PC-9 (cell line): ENCODE measurements at regions of chr5 and their contacts with region 1.

Region 1: GRCh38 chr5:154493274-154493673 is 15.2 kb upstream of the HAND1 start:
- DNase-seq: no peak
- H3K4me3 ChIP-seq: no peak overlapping the region
- H3K27ac ChIP-seq: no peak overlapping the region
- H3K4me1 ChIP-seq: no peaks in the 10 kb centered on the region
- H3K27me3 ChIP-seq: peaks cover 6% of the 10 kb centered on the region; the same call in 1 of the 2 replicates
- CTCF ChIP-seq: no peak

Region 2: GRCh38 chr5:153816870-153817269 is 676.4 kb before region 1 on chr5:
- CTCF ChIA-PET with region 1: no interaction called
- POLR2A ChIA-PET with region 1: no interaction called
- intact Hi-C with region 1: no loop called
- DNase-seq: no peak
- H3K4me3 ChIP-seq: no peak overlapping the region
- H3K27ac ChIP-seq: no peak overlapping the region
- H3K4me1 ChIP-seq: no peaks in the 10 kb centered on the region
- H3K27me3 ChIP-seq: peaks cover under 1% of the 10 kb centered on the region; the same call in 1 of the 2 replicates
- CTCF ChIP-seq: no peak

Region 3: DNA sequence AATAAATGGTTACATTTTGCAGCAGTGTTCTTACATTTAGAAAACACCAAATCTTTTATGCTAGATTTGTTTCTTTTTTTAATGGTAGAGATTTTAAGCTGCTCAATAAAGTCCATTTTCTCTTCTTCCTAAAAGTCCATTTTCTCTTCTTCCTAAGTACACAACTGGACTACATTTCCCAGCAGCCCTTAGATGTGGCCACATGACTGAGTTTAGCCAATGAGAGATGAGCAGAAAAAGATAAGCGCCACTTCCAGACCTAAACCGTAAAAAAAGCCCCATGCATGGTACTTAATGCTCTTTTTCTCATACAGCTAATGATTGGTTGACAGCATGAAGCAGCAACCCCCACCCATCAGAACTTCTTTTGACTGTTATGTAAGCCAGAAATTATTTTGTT is 661.3 kb before region 1 on chr5:
- CTCF ChIA-PET with region 1: no interaction called
- POLR2A ChIA-PET with region 1: no interaction called
- intact Hi-C with region 1: loop called (anchors 10 kb)
- DNase-seq: no peak
- H3K4me3 ChIP-seq: no peak overlapping the region
- H3K27ac ChIP-seq: no peak overlapping the region
- H3K4me1 ChIP-seq: no peaks in the 10 kb centered on the region
- H3K27me3 ChIP-seq: peaks cover 6% of the 10 kb centered on the region; the same call in 1 of the 2 replicates
- CTCF ChIP-seq: no peak

Region 4: GRCh38 chr5:154528005-154528594 is 34.8 kb after region 1 on chr5:
- CTCF ChIA-PET with region 1: no interaction called
- POLR2A ChIA-PET with region 1: no interaction called
- intact Hi-C with region 1: no loop called
- DNase-seq: no peak
- H3K4me3 ChIP-seq: no peak overlapping the region
- H3K27ac ChIP-seq: no peak overlapping the region
- H3K4me1 ChIP-seq: no peaks in the 10 kb centered on the region
- H3K27me3 ChIP-seq: no peaks in the 10 kb centered on the region
- CTCF ChIP-seq: no peak